CD8-positive, alpha-beta memory T cell (primary cell): ENCODE measurements at regions of chr9 and their contacts with region 1.

Region 1: DNA sequence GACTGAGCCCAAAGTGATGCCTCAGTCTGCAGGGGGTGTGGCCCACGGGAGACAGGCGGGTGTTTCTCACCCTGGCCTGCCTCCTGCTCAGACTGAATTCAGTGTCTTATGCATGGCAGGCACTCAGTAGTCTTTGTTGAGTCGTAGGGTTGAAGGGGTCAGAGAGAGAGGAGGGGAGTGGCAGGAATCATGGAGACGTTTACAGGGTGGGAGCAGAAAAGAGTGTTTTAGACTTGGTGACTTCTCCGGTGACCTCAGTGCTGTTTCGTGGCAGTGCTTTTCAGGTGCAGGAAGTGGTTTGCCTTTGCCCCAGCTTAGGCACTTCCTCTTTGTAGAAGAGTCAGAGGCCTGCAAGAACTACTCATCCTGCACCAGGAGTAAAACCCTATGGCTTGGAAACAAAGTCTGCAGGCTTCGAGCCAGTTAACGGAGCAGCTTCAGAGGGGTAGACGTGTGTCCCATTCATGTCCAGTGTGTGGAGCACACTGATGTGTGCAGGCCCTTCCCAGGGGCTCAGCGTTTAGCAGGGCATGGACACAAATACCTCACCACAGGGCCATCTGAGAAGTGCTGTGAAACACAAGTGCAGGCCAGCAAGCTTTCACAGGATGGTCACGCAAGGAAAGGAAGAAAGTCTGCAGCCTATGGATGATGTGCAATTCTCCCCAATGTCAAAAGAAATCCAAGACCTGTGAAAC is 24.5 kb upstream of the SEMA4D start:
- DNase-seq: peak; percentile 62 to 89 (median 84)
- H3K4me3 ChIP-seq: peak overlapping the region; percentile 33
- H3K4me3 Mint-ChIP-seq: peak overlapping the region; percentile 43 to 94 (median 74)
- H3K27ac ChIP-seq: peak overlapping the region; percentile 68
- H3K27ac Mint-ChIP-seq: peak overlapping the region; percentile 89 to 99 (median 96)
- H3K4me1 ChIP-seq: peaks cover 99% of the 10 kb centered on the region
- H3K4me1 Mint-ChIP-seq: peaks cover 92 to 99% (median 98%) of the 10 kb centered on the region in 3 donors
- H3K27me3 ChIP-seq: no peaks in the 10 kb centered on the region
- H3K27me3 Mint-ChIP-seq: no peaks in the 10 kb centered on the region

Region 2: DNA sequence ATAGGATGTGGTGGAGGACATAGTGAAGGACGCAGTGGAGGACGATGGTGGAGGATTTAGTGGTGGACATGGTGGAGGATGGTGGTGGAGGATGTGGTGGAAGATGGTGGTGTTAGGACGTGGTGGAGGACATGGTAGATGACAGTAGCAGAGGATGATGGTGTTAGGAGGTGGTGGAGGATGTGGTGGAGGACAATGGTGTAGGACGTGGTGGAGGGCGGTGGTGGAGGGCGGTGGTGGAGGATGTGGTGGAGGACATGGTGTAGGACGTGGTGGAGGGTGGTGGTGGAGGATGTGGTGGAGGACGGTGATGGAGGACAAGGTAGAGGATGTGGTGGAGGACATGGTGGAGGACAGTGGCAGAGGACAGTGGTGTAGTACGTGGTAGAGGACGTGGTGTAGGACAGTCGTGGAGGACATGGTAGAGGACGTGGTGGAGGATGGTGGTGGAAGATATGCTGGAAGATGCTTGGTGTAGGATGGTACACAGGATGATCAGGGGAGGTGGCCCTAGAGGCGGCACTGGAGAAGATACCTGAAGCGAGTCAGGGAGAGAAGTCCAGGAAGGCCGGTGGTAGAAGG is 462.4 kb before region 1 on chr9:
- CTCF ChIA-PET with region 1: no interaction called
- POLR2A ChIA-PET with region 1: no interaction called
- DNase-seq: no peak
- H3K4me3 ChIP-seq: no peak overlapping the region
- H3K4me3 Mint-ChIP-seq: no peak overlapping the region
- H3K27ac ChIP-seq: no peak overlapping the region
- H3K27ac Mint-ChIP-seq: no peak overlapping the region
- H3K4me1 ChIP-seq: no peaks in the 10 kb centered on the region
- H3K4me1 Mint-ChIP-seq: no peaks in the 10 kb centered on the region
- H3K27me3 ChIP-seq: no peaks in the 10 kb centered on the region
- H3K27me3 Mint-ChIP-seq: peaks cover 3 to 17% of the 10 kb centered on the region in 2 donors

Region 3: DNA sequence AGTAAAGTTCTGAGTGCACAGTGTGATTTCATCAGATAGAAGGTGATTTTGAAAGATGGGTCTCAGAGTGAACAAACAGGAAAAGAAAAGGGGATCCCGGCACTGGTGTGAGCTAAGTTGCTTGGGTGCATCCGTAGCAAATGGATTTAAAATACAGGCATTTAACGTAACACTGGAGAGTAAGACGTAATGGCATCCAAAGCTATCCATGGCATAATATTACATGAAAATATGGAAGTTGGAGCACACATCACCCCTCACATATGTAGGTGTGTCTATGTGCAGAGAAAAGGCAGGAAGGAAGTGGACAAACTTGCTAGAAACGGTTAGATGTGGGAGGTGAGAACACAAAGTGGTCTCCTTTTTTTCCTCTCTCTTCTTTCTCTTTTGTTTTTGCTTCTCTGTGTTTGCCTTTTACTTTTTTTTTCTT is 13.8 kb after region 1 on chr9:
- CTCF ChIA-PET with region 1: interaction called, 12 read pairs
- POLR2A ChIA-PET with region 1: interaction called, 8 read pairs
- DNase-seq: peak in 2 of 5 donors; percentile 77 to 80
- H3K4me3 ChIP-seq: peak overlapping the region; percentile 18
- H3K4me3 Mint-ChIP-seq: peak overlapping the region; percentile 29 to 76 (median 66)
- H3K27ac ChIP-seq: peak overlapping the region; percentile 20
- H3K27ac Mint-ChIP-seq: peak overlapping the region; percentile 74 to 96 (median 90)
- H3K4me1 ChIP-seq: peaks cover 95% of the 10 kb centered on the region
- H3K4me1 Mint-ChIP-seq: peaks cover 84 to 96% (median 90%) of the 10 kb centered on the region in 3 donors
- H3K27me3 ChIP-seq: no peaks in the 10 kb centered on the region
- H3K27me3 Mint-ChIP-seq: no peaks in the 10 kb centered on the region